CD4-positive, alpha-beta T cell (primary cell): ENCODE measurements at regions of chr22 and their contacts with region 1.

Region 1: GRCh38 chr22:40376149-40376548 is 5.8 kb downstream of the SGSM3 start:
- DNase-seq: no peak
- ATAC-seq: no peak
- H3K4me3 ChIP-seq: no peak overlapping the region
- H3K4me3 Mint-ChIP-seq: no peak overlapping the region
- H3K27ac ChIP-seq: no peak overlapping the region
- H3K27ac Mint-ChIP-seq: no peak overlapping the region
- H3K4me1 ChIP-seq: peaks cover 12% of the 10 kb centered on the region
- H3K4me1 Mint-ChIP-seq: peaks cover 38% of the 10 kb centered on the region
- H3K27me3 ChIP-seq: no peaks in the 10 kb centered on the region
- H3K27me3 Mint-ChIP-seq: no peaks in the 10 kb centered on the region
- CTCF ChIP-seq: no peak

Region 2: DNA sequence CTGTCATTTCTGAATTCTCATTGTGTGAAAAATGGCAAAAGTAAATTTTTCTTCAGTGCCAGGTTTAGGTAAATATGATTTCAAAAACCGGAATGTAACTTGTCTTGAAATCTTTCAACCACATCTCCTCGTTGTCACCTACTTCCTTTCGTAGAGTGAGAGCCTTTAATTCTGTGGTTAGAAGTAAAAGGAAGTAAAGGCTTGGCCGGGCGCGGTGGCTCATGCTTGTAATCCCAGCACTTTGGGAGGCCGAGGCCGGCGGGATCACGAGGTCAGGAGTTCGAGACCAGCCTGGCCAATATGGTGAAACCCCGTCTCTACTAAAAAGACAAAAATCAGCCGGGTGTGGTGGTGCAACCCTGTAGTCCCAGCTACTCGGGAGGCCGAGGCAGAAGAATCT is 24.0 kb after region 1 on chr22:
- CTCF ChIA-PET with region 1: no interaction called
- POLR2A ChIA-PET with region 1: interaction called, 10 read pairs
- intact Hi-C with region 1: no loop called
- DNase-seq: peak in 13 of 14 experiments; percentile 17 to 84 (median 47)
- ATAC-seq: peak; percentile 63
- H3K4me3 ChIP-seq: no peak overlapping the region
- H3K4me3 Mint-ChIP-seq: peak overlapping the region; percentile 78
- H3K27ac ChIP-seq: peak overlapping the region in 1 of 2 donors; percentile 3
- H3K27ac Mint-ChIP-seq: peak overlapping the region; percentile 90
- H3K4me1 ChIP-seq: peaks cover 76% of the 10 kb centered on the region
- H3K4me1 Mint-ChIP-seq: peaks cover 84% of the 10 kb centered on the region
- H3K27me3 ChIP-seq: no peaks in the 10 kb centered on the region
- H3K27me3 Mint-ChIP-seq: no peaks in the 10 kb centered on the region
- CTCF ChIP-seq: no peak

Region 3: DNA sequence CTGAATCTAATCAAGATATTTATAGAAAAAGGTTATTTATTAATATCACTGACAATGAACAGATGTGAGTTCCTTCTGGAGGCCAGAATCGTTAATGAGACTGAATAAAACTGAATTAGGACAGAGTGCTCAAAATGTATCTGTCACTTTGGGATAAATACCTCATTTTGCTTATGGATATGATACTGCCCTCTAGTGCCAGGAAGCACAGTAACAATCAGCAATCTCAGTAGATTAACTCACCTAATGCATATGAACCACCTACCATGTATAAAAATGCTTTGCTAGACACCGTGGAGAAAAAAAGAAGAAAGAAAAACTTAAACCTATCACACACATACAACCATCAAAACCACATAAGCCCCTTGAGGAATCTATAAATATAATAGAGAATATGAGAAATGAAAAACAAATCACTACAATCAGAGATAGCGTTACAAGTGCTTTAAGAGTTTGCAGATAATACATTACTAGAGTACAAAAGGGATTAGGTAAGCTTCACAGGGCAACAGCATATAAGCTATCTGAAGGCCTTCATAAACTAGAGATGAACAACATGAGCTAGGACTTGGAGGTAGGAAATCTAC is 111.6 kb after region 1 on chr22:
- CTCF ChIA-PET with region 1: no interaction called
- POLR2A ChIA-PET with region 1: no interaction called
- intact Hi-C with region 1: loop called in 1 of 2 experiments (anchors 5 kb)
- DNase-seq: peak in 3 of 14 experiments; percentile 51 to 68 (median 62)
- ATAC-seq: peak; percentile 53
- H3K4me3 ChIP-seq: no peak overlapping the region
- H3K4me3 Mint-ChIP-seq: no peak overlapping the region
- H3K27ac ChIP-seq: no peak overlapping the region
- H3K27ac Mint-ChIP-seq: peak overlapping the region; percentile 4
- H3K4me1 ChIP-seq: peaks cover 5% of the 10 kb centered on the region
- H3K4me1 Mint-ChIP-seq: peaks cover 52% of the 10 kb centered on the region
- H3K27me3 ChIP-seq: no peaks in the 10 kb centered on the region
- H3K27me3 Mint-ChIP-seq: no peaks in the 10 kb centered on the region
- CTCF ChIP-seq: peak; percentile 91